HCT116 (cell line): ENCODE measurements at regions of chr4 and their contacts with region 1.

Region 1: DNA sequence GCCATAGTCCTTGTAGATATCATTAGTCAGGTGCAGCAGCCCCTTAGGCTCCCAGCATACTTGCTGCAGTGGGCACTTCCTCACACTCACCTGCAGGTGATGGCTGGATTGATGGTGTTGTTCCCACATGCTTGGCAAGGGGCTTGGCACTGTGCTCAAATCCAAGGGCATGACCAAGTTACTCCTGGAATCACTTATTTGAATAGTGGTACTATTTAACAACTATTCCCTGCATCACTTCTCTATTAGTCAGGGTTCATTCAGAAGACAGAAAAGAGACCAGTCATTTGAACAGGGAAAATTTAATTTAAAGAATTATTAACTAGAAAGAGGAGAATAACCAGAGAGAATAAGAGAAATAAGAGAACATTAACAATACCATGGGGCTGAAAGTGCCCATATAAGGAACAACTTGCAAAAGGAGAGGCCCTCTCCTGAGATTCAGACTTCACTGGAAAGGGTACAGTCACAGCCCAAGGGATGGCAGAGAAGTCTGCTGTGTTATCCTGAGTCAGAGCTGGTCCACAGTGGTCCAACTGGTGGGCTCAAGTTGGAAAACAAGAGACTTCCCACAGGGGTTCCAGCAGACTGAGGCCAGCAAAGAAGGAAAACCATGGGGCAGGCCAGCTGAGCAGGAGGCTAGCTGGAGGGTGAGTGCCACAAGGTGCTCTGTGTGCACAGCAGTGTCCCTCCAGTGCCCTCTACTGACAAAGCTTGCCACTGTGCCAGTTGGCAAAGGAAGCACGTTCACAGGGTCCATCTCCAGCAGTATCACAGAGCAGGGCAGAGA is 9.8 kb downstream of the SPP1 start:
- DNase-seq: peak; percentile 58
- ATAC-seq: peak; percentile 100
- H3K4me3 ChIP-seq: no peak overlapping the region
- H3K27ac ChIP-seq: no peak overlapping the region
- H3K4me1 ChIP-seq: peaks cover 0 to 5% of the 10 kb centered on the region in 2 experiments; a peak in 1 of 4 replicates
- H3K27me3 ChIP-seq: no peaks in the 10 kb centered on the region
- CTCF ChIP-seq: peak; percentile 68 to 93 (median 82)
- POLR2A ChIP-seq: no peak
- RAD21 ChIP-seq: peak; percentile 90

Region 2: DNA sequence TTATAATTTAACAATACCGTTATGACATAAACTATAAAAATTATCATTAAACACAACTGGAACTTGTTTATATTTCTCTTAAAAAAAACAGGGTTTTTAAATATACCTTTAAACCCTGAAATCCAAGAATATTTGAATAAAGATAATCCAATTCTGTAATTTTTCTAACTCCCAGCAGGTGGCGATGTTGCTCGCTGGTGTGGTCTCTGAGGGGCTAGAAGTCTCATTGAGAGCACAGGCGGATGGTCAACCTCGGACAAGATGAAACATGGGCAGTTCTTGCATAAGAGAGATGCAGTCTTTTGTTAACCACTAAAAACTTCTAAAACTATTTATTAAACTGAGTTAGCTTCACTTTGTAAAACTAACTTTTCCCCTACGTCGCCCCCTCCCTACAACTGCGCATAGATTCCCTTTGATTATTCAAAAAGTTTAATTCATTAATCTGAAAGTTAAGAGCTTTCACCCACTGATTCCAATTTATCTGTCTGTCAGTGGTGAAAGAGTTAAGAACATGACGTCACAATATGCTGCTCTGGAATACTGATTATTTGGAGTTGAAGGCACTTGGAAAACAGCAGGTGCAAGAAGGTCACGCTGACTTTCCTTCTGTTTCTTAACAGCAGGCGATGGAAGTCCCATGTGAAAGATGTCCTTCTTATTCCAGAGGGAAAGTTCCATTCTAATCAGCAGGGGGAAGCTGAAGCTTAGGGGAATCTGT is 305.7 kb before region 1 on chr4:
- CTCF ChIA-PET with region 1: no interaction called
- POLR2A ChIA-PET with region 1: no interaction called
- RAD21 ChIA-PET with region 1: no interaction called
- intact Hi-C with region 1: loop called (anchors 10 kb)
- DNase-seq: peak; percentile 48
- ATAC-seq: peak; percentile 72
- H3K4me3 ChIP-seq: no peak overlapping the region
- H3K27ac ChIP-seq: no peak overlapping the region
- H3K4me1 ChIP-seq: no peaks in the 10 kb centered on the region
- H3K27me3 ChIP-seq: no peaks in the 10 kb centered on the region
- CTCF ChIP-seq: peak; percentile 67 to 94 (median 84)
- POLR2A ChIP-seq: no peak
- RAD21 ChIP-seq: peak; percentile 89

Region 3: DNA sequence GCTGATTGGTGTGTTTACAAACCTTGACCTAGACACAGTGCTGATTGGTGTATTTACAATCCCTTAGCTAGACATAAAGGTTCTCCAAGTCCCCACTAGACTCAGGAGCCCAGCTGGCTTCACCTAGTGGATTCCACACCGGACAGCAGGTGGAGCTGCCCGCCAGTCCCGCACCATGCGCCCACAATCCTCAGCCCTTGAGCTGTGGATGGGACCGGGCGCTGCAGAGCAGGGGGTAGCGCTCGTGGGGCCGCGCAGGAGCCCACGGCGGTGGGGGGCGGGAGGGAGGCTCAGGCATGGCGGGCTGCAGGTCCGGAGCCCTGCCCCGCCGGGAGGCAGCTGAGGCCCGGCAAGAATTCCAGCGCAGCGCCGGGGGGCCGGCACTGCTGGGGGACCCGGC is 121.8 kb before region 1 on chr4:
- CTCF ChIA-PET with region 1: interaction called, 14 read pairs
- POLR2A ChIA-PET with region 1: no interaction called
- RAD21 ChIA-PET with region 1: interaction called in 1 of 2 experiments, 7 read pairs
- intact Hi-C with region 1: loop called (anchors 1 kb)
- DNase-seq: no peak
- ATAC-seq: peak; percentile 73
- H3K4me3 ChIP-seq: no peak overlapping the region
- H3K27ac ChIP-seq: no peak overlapping the region
- H3K4me1 ChIP-seq: peaks cover 0 to 9% of the 10 kb centered on the region in 2 experiments; a peak in 1 of 4 replicates
- H3K27me3 ChIP-seq: no peaks in the 10 kb centered on the region
- CTCF ChIP-seq: peak in 2 of 3 experiments; percentile 4 to 19; a peak in 2 of 6 replicates
- POLR2A ChIP-seq: no peak
- RAD21 ChIP-seq: peak; percentile 43